ENCODE measurements at regions of chr22 and their contacts with region 1.

Region 1: GRCh38 chr22:38353142-38353629 is 36.0 kb upstream of the CSNK1E start:
- DNase-seq: peak in 9 of 10 donors; percentile 36 to 87 (median 52)
- H3K4me3 ChIP-seq: peak overlapping the region in 3 of 59 donors; percentile 1 to 31 (median 13)
- H3K27ac ChIP-seq: peak overlapping the region in 21 of 59 donors; percentile 20 to 75 (median 36)
- H3K27me3 ChIP-seq: no peaks in the 10 kb centered on the region
- CTCF ChIP-seq: peak; percentile 86 to 99 (median 98)

Region 2: DNA sequence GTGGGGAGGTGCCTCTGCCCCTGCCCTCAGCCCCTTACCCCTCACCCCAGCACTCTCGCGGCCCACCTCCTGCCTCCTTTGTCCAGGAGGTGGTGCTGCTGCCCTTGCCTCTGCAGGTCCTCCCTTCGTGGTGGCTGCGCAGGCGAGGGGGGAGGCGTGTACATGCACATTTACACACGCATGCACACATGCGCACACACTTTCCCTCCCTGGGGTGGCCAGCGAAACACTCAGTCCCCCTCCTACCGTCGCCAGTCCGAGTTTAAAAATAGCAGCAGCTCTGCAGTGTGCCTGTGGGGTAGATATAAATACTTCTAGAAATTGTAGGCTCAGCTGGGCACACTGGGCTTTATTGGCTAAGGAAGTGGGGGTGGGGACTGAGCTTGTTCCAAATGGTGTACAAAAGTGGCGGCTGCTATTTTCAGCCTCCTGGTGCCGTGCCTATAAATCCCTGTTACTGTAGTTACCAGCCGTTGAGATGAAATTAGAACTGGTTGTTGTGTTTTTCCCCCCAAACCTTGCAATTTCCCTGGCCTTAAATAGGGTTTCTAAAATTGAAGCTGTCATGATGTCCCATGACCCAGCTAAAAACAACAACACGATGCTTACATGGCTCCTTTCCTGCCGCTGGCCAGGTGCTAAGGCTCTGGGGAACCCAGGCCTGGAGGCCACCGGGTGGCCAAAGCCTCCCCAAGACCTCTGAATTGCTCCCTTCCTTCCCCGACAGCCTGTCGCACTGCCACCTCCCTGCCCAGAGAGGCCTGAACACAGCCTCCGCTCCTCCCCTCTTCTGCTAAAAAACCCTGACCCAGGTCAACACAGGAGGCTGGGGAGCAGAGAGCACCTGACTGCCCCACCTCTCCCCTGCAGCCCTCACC is 283.6 kb before region 1 on chr22:
- intact Hi-C with region 1: loop called (anchors 10 kb)
- DNase-seq: peak; percentile 77 to 93 (median 88)
- H3K4me3 ChIP-seq: peak overlapping the region in 12 of 59 donors; percentile 2 to 43 (median 15)
- H3K27ac ChIP-seq: peak overlapping the region; percentile 70 to 100 (median 97)
- H3K27me3 ChIP-seq: no peaks in the 10 kb centered on the region
- CTCF ChIP-seq: peak in 55 of 56 donors; percentile 58 to 92 (median 78)

Region 3: DNA sequence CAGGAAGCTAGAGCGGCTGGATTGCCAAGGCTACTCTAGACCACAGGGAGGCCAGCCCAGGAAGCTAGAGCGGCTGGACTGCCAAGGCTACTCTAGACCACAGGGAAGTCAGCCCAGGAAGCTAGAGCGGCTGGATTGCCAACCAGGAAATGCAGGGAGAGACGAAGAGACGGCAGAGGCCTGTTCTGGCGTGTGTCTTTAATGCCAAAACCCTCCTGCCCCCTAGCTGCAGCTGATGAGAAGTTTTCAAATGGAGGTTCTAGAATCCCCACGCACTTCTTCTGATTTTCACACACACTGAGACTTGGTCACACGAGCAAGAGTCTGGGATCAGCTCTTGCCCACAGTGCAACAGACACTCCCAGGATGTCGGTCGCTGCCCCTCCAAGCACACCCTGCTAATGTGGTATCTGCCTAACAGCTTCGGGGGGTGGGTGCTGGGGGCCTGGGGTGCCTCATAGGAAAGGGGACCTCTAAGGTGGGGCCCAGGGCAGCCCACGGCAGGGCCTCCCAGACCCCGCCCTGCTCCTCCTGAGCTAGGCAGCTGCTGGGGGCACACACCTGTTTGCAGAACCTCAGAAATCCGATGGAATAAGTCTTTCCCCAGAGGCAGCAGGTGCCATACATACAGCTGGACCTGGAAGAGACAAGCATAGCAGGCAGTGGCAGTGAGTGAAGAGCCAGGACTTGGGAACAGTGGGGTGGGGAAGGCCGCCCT is 122.9 kb before region 1 on chr22:
- intact Hi-C with region 1: loop called (anchors 5 to 10 kb)
- DNase-seq: peak in 4 of 10 donors; percentile 57 to 74 (median 64)
- H3K4me3 ChIP-seq: no peak overlapping the region
- H3K27ac ChIP-seq: peak overlapping the region in 55 of 59 donors; percentile 1 to 99 (median 79)
- H3K27me3 ChIP-seq: no peaks in the 10 kb centered on the region
- CTCF ChIP-seq: peak; percentile 18 to 70 (median 57)

Region 4: DNA sequence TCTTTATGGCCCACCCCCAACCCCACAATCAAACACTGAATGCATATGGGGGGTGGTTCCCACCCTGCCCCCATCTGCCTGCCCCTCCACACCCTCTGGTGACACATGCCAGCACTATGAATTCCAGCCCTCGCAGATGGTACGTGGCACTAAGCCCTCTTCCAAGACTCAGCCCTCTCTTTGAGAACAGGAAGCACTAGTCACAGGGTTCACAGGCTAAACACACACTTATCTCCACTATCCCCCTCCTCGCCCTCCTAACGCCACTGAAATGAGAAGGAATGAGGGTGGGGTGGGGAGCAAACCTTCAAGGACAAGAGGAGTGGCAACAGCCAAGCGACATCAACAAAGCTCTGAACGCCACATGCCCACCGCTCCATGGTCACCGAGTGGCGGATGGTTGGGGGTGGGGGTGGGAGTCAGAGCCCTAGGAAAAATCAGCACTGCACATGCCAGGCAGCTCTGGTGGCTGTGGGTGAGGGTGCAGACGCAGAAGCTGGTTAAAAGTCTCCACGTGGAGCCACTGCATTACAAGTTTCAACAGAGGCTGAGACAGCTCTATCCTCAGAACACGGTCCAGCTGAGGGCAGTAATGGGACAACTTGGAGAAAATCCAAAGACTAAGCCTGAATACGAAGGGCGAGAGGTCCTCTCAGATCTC is 114.0 kb before region 1 on chr22:
- intact Hi-C with region 1: loop called (anchors 5 to 10 kb)
- DNase-seq: peak in 4 of 10 donors; percentile 45 to 79 (median 67)
- H3K4me3 ChIP-seq: peak overlapping the region in 11 of 59 donors; percentile 2 to 30 (median 19)
- H3K27ac ChIP-seq: peak overlapping the region; percentile 52 to 99 (median 96)
- H3K27me3 ChIP-seq: no peaks in the 10 kb centered on the region
- CTCF ChIP-seq: peak in 52 of 56 donors; percentile 29 to 72 (median 52)

Region 5: GRCh38 chr22:38262051-38262795 is 91.0 kb before region 1 on chr22:
- intact Hi-C with region 1: loop called in 1 of 2 experiments (anchors 10 kb)
- DNase-seq: peak; percentile 60 to 88 (median 78)
- H3K4me3 ChIP-seq: peak overlapping the region in 6 of 59 donors; percentile 2 to 45 (median 27)
- H3K27ac ChIP-seq: peak overlapping the region; percentile 23 to 100 (median 93)
- H3K27me3 ChIP-seq: no peaks in the 10 kb centered on the region
- CTCF ChIP-seq: peak in 55 of 56 donors; percentile 41 to 79 (median 66)

Region 6: GRCh38 chr22:38317122-38317994 is 35.8 kb before region 1 on chr22 and contains the start of gene CSNK1E:
- intact Hi-C with region 1: loop called in 1 of 2 experiments (anchors 2 kb)
- DNase-seq: peak; percentile 74 to 88 (median 82)
- H3K4me3 ChIP-seq: peak within 1 kb of the TSS; percentile 53 to 96 (median 85)
- H3K27ac ChIP-seq: peak within 1 kb of the TSS; percentile 94 to 100 (median 99)
- H3K27me3 ChIP-seq: no peaks in the 10 kb centered on the region
- CTCF ChIP-seq: no peak
- total RNA-seq, gene CSNK1E: 150 to 281 (median 197) TPM

Measured in dorsolateral prefrontal cortex (tissue), 120 donors.